ENCODE measurements at regions of chr9 and their contacts with region 1.

Region 1: GRCh38 chr9:24359046-24359445 is 186.7 kb downstream of the IZUMO3 start:
- DNase-seq: no peak
- ATAC-seq: no peak

Region 2: DNA sequence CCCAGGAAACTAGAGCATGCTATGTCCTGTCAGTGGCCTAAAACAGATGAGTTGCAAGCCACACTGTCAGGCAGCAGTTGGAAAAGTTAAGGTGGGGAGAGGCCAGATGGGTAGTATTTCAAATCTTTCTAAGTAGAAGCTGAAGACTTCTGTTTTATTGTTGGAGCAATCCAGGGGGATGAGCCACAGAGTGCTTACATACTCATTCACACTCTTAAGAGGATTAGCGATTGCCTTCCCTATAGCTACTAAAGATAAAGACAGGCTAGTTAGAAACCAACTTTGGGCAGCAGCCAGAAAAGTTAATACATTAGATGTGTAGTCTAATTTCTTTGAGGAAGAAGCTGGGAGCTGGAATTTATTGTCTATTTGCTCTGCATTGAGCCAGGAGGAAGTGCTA is 471.3 kb before region 1 on chr9:
- intact Hi-C with region 1: loop called in 1 of 2 experiments (anchors 5 kb)
- DNase-seq: no peak
- ATAC-seq: no peak

Region 3: GRCh38 chr9:24245988-24246387 is 113.1 kb before region 1 on chr9:
- intact Hi-C with region 1: no loop called
- DNase-seq: no peak
- ATAC-seq: no peak

Region 4: DNA sequence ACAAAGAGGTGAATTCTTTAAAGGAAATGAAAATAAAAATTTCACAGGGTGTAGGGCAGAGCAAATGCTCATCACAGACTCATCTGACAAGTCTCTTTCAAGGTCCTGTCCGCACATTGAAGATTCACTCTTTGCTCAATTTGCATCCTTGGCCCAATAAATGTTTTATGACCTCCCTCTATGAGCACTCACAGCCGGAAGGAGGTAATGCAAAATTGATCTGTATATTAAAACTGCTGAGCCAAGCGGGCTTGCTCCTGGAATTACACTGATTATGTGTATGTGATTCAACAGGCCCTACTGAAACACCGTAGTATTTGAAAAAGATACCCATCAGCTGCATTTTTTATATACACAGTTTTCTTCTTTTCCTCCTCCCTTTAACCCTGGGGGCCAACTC is 60.1 kb before region 1 on chr9:
- intact Hi-C with region 1: no loop called
- DNase-seq: no peak
- ATAC-seq: no peak

Measured in left colon (tissue), 2 donors.